Activated T-helper 2 cell treated with anti-CD3 and anti-CD28 coated beads, Interferon-gamma antibody, Interleukin-2, Interleukin-4, amounts not matched to agents 10 μg/mL and 5 μg/mL and 100 μg/mL, durations not matched to agents 14 hours and 24 hours and 36 hours (primary cell): ENCODE measurements at regions of chr20 and their contacts with region 1.

Region 1: GRCh38 chr20:5844063-5844681 is 94.0 kb downstream of the SHLD1 start:
- DNase-seq: peak; percentile 64
- H3K4me3 Mint-ChIP-seq: peak overlapping the region; percentile 61
- H3K27ac Mint-ChIP-seq: peak overlapping the region; percentile 89
- H3K4me1 Mint-ChIP-seq: peaks cover 55% of the 10 kb centered on the region
- H3K27me3 Mint-ChIP-seq: peaks cover 2% of the 10 kb centered on the region

Region 2: DNA sequence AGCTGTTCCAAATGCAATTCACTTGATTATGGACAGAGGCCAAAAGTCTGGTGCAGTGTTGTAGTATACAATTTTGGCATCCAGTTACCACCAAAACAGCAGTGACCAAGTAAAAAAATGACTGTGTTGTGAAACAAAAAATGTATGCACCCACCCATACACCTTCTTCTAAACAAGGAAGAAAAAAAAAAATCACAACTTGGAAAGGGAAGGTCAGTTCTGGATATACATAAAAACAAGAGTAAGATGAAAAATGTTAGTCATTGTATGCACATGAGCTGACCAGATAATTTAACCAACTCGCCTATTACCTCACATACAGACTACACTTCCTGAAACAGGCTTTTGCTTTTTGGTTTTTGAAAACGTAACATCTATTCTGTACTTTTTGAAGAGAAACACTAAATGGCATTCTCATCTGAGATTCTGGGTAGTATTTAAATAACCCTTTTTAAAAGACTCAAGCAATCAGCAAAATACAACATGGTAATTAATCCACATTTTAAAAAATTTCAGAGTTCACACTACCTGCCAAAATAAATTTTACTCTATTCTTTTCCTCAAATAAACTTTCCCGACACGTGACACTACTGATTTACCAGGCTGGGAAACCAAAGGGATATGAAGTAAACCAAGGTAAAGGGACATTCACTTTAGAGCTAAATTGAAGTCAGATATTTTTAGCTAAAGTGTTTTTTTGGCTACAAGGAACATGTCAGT is 235.6 kb before region 1 on chr20:
- intact Hi-C with region 1: loop called (anchors 5 kb)
- DNase-seq: no peak
- H3K4me3 Mint-ChIP-seq: peak overlapping the region; percentile 100
- H3K27ac Mint-ChIP-seq: peak overlapping the region; percentile 82
- H3K4me1 Mint-ChIP-seq: peaks cover 46% of the 10 kb centered on the region
- H3K27me3 Mint-ChIP-seq: no peaks in the 10 kb centered on the region

Region 3: DNA sequence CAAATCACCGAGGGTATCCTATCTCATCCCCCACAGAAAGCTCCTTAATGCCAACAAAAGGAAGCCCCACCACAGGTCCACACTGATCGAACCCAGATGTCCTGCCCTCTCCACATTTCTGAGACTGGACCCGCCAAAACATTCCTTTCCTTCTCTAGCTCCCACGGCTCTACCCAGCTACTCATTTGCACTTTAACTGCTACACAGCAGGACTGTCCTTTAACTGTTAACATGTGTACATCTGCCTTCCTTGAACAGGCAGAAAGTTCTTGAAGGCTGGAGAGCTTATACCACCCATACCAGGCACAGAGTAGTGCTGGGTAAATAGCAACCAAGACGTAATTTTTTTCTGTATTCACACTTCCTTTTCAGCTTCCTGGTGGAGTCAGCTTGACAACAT is 37.5 kb after region 1 on chr20:
- intact Hi-C with region 1: no loop called
- DNase-seq: no peak
- H3K4me3 Mint-ChIP-seq: no peak overlapping the region
- H3K27ac Mint-ChIP-seq: no peak overlapping the region
- H3K4me1 Mint-ChIP-seq: peaks cover 3% of the 10 kb centered on the region
- H3K27me3 Mint-ChIP-seq: peaks cover 15% of the 10 kb centered on the region

Region 4: GRCh38 chr20:5918856-5919625 is 74.9 kb after region 1 on chr20:
- intact Hi-C with region 1: loop called (anchors 2 kb)
- DNase-seq: no peak
- H3K4me3 Mint-ChIP-seq: no peak overlapping the region
- H3K27ac Mint-ChIP-seq: peak overlapping the region; percentile 68
- H3K4me1 Mint-ChIP-seq: peaks cover 20% of the 10 kb centered on the region
- H3K27me3 Mint-ChIP-seq: peaks cover 19% of the 10 kb centered on the region